HAP-1 (cell line): ENCODE measurements at regions of chr17 and their contacts with region 1.

Region 1: DNA sequence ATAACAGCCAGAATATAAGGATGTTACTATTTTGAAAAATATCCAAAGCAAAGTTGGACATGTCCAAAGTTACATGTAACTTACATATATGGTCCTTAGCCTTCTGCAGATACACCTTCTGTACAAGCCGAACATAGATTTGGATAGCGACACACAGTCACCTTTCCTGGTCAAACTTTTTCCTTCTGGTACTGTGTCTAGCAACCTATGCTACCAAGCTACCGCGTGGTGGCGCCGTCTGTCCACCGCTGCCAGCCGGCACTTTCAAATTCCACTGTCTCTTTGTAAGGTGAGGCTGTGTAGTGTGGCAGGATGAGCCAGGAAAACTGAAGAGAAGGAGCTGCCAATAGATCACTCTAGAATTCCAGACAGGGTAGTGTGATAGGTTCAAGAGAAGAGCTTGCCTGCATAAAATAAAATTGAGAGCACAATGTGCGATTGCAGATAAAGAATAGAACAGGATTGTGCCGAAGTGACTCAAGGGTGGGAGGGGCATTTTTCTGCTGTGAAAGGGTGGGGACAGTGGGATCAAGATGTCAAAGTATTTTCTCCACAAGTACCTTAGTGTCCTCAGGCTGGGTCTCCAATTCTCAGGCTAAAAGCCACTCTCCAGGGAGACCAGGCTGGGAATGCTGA is 366.9 kb downstream of the SLC39A11 start:
- DNase-seq: peak; percentile 63 to 69
- H3K4me3 ChIP-seq: no peak overlapping the region
- H3K4me1 ChIP-seq: peaks cover 4% of the 10 kb centered on the region; the same call in 1 of the 2 replicates
- H3K27me3 ChIP-seq: no peaks in the 10 kb centered on the region

Region 2: GRCh38 chr17:72456026-72456569 is 269.5 kb before region 1 on chr17:
- in situ Hi-C with region 1: no loop called
- DNase-seq: no peak
- H3K4me3 ChIP-seq: no peak overlapping the region
- H3K4me1 ChIP-seq: no peaks in the 10 kb centered on the region
- H3K27me3 ChIP-seq: no peaks in the 10 kb centered on the region

Region 3: GRCh38 chr17:72556944-72557826 is 168.4 kb before region 1 on chr17:
- in situ Hi-C with region 1: loop called (anchors 10 kb)
- DNase-seq: peak; percentile 36 to 82
- H3K4me3 ChIP-seq: no peak overlapping the region
- H3K4me1 ChIP-seq: no peaks in the 10 kb centered on the region
- H3K27me3 ChIP-seq: no peaks in the 10 kb centered on the region

Region 4: DNA sequence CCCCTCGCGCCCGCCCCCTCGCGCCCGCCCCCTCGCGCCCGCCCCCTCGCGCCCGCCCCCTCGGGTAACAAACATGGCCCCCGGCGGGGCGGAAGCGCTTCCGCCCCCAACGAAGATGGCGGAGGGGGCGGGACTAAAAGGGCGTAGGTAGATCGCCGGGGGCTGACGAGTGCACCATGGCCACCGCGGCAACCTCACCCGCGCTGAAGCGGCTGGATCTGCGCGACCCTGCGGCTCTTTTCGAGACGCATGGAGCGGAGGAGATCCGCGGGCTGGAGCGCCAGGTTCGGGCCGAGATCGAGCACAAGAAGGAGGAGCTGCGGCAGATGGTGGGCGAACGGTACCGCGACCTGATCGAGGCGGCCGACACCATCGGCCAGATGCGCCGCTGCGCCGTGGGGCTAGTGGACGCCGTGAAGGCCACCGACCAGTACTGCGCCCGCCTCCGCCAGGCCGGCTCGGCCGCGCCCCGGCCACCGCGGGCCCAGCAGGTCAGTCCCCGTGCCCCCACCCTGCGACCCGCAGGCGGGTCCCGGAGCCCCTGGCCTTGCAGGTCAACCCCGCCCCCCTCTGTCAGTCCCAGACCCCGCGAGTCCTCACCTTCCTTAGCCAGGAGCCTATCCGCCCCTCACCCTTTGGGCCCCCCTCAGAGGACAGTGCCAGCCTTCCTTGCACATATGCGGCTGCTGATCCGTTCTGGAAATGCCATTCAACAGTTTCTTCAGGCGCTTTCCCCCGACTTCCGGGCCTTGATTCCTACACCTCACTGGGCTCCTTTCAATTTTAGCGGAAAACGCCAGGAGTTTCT is 467.5 kb after region 1 on chr17 and contains the start of gene COG1:
- in situ Hi-C with region 1: loop called (anchors 25 kb)
- DNase-seq: peak; percentile 68 to 74
- H3K4me3 ChIP-seq: peak within 1 kb of the TSS; percentile 96
- H3K4me1 ChIP-seq: peaks cover 9% of the 10 kb centered on the region; the same call in 1 of the 2 replicates
- H3K27me3 ChIP-seq: no peaks in the 10 kb centered on the region

Region 5: DNA sequence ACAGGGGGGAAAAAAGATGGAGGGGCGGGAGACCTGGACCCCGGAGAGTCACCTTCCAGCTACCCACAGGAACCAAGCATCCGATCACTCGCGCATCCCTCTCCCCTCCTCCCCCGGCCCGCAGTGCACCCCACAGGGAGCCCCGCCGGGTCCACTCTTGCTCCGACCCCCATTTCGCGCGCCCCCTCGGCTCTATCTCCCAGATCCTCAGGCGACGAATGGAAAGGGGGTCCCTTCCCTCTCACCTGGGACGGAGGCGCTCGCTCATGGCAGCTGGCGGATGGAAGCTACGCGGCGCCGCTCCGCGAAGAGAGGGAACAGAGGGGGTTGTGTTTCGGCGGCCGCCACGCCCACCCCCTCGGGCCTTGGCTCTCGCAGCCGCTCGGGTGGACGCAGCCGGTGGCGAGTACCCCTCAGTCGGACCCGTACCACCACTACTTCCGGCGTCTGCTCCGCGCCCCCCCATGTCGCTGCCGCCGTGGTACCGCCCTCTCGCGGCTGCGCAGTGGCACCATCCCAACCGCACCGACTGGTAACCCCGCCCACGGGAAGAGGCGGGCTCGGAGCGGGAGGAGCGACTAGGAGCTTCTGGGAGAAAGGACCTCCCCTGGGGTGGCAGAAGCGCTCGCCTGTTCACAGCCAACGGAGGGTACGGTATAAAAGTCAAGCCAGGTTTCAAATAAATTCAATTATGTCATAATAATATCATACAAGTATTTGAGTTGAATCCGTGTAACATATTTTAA is 506.5 kb after region 1 on chr17:
- in situ Hi-C with region 1: loop called (anchors 10 kb)
- DNase-seq: peak; percentile 92 to 97
- H3K4me3 ChIP-seq: peak overlapping the region; percentile 90
- H3K4me1 ChIP-seq: peaks cover 18% of the 10 kb centered on the region
- H3K27me3 ChIP-seq: no peaks in the 10 kb centered on the region

Region 6: GRCh38 chr17:73371285-73371684 is 645.7 kb after region 1 on chr17:
- in situ Hi-C with region 1: loop called (anchors 5 kb)
- DNase-seq: no peak
- H3K4me3 ChIP-seq: no peak overlapping the region
- H3K4me1 ChIP-seq: no peaks in the 10 kb centered on the region
- H3K27me3 ChIP-seq: peaks cover 24% of the 10 kb centered on the region